KBM-7 (cell line): ENCODE measurements at regions of chr22 and their contacts with region 1.

Region 1: DNA sequence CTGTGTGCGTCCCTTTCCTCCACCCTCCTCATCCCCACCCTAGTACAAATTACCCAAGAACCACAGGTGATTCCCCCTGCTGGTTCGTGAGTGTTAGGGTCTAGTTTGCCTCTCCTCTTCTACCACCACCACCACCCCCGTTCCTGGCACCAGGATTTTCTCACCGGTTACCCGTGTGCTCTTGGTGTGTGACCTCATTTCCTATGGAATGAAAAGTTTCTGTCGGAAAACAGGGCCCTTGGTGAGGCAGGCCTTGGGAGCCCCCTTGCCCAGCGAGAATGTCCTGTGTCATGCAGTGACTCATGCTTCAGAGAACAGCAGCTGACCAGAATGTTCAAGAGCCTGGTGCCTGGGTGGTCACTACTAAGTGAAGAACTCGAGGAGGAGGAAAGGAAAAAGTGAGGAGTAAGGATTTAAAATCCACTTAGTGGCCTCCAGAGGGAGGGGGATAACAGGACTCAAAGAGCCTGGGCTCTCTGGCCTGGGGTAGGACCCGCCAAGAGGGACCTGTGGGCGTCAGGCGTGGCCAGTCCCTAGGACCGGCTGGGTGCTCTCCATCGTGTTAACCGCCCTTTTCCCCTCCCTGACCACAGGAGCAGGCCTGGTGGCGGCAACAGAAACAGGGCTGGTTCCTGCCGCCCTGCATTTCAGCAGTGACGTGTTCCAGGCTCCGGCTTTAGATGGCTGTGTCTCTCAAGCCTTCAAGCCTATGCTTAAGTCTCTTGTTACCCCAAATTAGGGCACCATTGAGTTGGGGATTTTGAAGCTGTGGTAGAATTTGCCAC is 30.2 kb downstream of the C22orf31 start:
- DNase-seq: no peak

Region 2: DNA sequence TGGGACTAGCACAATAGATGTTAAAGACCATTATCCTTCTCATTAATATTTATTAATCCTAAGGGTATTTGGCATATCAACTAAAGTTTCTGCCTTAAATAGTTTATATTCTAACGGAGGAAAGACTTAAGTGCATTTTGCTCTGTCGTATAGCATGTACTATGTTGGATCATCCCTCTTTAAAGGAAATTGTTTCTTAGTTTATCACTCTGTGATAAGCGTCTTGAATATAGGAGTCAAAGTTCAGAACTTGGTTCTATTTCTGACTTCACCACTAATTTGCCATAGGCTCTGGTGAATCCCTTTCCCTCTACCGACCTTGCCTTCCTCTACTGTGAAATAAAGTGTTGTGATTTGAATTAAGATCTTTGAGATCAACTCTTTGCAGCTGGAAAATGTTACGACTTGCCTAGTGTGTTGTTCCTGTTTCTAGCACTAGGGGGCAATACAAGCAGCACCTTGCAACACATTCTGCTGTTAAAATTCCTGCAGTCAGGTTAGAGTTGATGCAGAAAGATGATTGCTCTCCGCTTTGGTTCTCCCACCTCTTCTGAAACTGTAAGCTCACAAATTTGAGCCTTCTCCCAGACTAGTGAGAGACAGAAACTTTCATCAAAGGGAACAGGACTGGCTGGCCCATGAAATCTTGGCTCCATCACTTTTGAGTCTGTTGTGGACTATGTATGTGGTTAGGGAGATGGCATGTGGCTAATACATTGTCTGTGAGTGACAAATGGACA is 175.9 kb before region 1 on chr22:
- in situ Hi-C with region 1: loop called (anchors 10 kb)
- DNase-seq: peak; percentile 77